BJ (cell line): ENCODE measurements at regions of chr4 and their contacts with region 1.

Region 1: GRCh38 chr4:152640058-152640833 is 39.6 kb downstream of the TMEM154 start:
- DNase-seq: no peak
- H3K4me3 ChIP-seq: no peak overlapping the region
- H3K27me3 ChIP-seq: no peaks in the 10 kb centered on the region
- CTCF ChIP-seq: peak; percentile 40

Region 2: DNA sequence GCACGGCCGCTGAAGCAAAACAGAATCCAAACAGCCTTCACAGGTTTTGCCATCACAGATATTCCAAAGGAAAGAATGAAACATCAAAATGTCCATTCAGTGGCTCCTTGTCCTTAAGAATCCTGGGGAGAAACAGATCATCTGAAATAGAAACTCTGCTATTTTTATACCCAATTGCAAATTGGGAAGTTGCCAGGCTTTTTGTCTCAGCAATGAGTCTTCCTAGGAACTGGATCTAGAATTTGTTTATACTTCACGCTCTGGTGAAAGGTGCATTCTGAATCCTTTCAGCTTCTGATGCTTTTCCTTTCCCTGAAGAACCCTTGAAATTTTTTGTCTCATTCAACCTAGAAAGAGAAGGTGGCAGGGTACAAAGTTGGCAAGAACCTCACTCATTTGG is 323.3 kb before region 1 on chr4:
- CTCF ChIA-PET with region 1: no interaction called
- POLR2A ChIA-PET with region 1: no interaction called
- DNase-seq: no peak
- H3K4me3 ChIP-seq: no peak overlapping the region
- H3K27me3 ChIP-seq: peaks cover 2% of the 10 kb centered on the region
- CTCF ChIP-seq: no peak

Region 3: GRCh38 chr4:152408514-152409327 is 231.5 kb before region 1 on chr4:
- CTCF ChIA-PET with region 1: interaction called, 16 read pairs
- POLR2A ChIA-PET with region 1: no interaction called
- DNase-seq: no peak
- H3K4me3 ChIP-seq: no peak overlapping the region
- H3K27me3 ChIP-seq: no peaks in the 10 kb centered on the region
- CTCF ChIP-seq: peak; percentile 67

Region 4: DNA sequence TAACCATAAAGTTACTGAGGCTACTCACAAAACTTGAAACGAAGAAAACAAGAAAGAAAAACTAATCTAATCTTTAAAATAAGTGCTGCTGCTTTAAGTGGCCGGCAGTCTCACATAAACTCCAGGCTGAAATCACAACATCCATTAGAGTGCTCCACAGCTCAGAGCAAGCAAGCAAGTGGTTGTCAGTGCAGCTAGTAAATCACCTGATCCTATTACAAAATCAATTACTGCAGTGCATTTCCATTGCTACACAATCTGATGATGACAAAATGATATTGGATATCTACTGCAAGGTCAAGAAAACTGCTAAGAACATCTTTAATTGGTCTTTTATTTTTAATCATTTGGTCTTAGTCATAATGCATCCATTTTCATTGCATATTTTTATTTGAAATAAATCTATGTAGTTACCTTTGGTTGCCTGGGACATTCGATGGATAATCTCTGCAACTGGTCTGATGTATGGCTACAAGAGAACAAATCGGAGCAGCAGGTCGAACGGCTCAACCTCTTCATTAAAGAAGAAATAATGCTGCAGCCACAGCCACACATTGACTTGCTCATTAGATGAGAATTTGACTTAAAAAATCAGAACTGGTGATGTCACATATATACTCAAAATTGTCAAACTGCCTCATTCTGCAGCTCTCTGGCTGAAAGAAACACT is 192.1 kb before region 1 on chr4:
- CTCF ChIA-PET with region 1: interaction called, 17 read pairs
- POLR2A ChIA-PET with region 1: no interaction called
- DNase-seq: no peak
- H3K4me3 ChIP-seq: no peak overlapping the region
- H3K27me3 ChIP-seq: no peaks in the 10 kb centered on the region
- CTCF ChIP-seq: no peak

Region 5: GRCh38 chr4:152454398-152455011 is 185.7 kb before region 1 on chr4:
- CTCF ChIA-PET with region 1: interaction called, 17 read pairs
- POLR2A ChIA-PET with region 1: no interaction called
- DNase-seq: no peak
- H3K4me3 ChIP-seq: no peak overlapping the region
- H3K27me3 ChIP-seq: no peaks in the 10 kb centered on the region
- CTCF ChIP-seq: peak; percentile 66

Region 6: GRCh38 chr4:152500800-152501434 is 139.3 kb before region 1 on chr4:
- CTCF ChIA-PET with region 1: interaction called, 168 read pairs
- POLR2A ChIA-PET with region 1: no interaction called
- DNase-seq: peak; percentile 35
- H3K4me3 ChIP-seq: no peak overlapping the region
- H3K27me3 ChIP-seq: no peaks in the 10 kb centered on the region
- CTCF ChIP-seq: peak; percentile 75

Region 7: GRCh38 chr4:152628128-152628527 is 12.1 kb before region 1 on chr4:
- CTCF ChIA-PET with region 1: interaction called, 10 read pairs
- POLR2A ChIA-PET with region 1: no interaction called
- DNase-seq: no peak
- H3K4me3 ChIP-seq: no peak overlapping the region
- H3K27me3 ChIP-seq: no peaks in the 10 kb centered on the region
- CTCF ChIP-seq: no peak

Region 8: GRCh38 chr4:152696764-152697261 is 56.6 kb after region 1 on chr4:
- CTCF ChIA-PET with region 1: no interaction called
- POLR2A ChIA-PET with region 1: no interaction called
- DNase-seq: no peak
- H3K4me3 ChIP-seq: no peak overlapping the region
- H3K27me3 ChIP-seq: peaks cover 12% of the 10 kb centered on the region
- CTCF ChIP-seq: no peak